ENCODE measurements at regions of chr14 and their contacts with region 1.

Region 1: DNA sequence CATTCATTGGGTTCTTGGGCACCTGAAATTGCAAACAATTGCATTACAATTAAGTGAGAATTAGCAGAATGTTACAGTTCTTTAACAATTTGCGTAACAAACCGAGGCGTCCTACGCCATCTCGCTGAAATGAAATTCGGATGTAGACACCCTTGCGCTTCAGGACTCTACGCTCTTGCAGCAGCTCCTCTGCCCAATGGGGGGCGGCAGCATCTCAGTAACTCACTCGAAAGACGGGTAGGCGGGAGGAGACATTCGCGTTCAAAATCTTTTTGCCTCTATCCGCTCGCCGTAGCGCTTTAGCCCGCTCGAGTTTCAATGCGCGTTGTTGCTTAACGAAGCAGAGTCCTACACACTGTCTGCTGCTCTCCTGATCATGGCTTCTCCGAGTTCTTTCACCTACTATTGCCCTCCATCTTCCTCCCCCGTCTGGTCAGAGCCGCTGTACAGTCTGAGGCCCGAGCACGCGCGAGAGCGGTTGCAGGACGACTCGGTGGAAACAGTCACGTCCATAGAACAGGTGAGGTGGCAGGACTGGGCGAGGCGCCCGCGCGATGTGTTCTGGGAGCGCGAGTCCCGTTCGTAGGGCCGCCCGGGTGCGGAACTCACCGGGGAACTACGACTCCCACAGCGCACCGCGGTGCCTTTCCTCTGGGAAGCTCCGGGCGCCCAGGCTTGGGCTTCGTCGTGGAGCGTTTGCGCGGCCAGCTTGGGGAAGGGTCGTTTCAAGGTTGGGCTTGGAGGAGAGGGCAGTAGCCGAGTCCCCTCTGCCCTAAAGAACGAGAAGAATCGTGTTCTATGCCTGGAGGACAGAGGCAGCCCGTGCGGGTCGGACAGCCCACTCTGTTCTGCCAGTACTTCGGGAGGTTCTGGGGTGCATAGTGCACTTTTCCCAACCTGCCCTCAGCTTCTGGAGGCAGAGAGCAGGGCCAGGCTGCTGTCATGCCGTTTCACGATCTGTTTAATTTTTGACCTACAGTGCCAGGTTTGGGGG is at the start of gene FNTB:
- DNase-seq: peak; percentile 95 to 96
- H3K4me3 ChIP-seq: peak within 1 kb of the TSS; percentile 80
- H3K4me3 Mint-ChIP-seq: peak within 1 kb of the TSS; percentile 98
- H3K27ac Mint-ChIP-seq: peak within 1 kb of the TSS; percentile 99
- H3K4me1 ChIP-seq: no peaks in the 10 kb centered on the region
- H3K4me1 Mint-ChIP-seq: peaks cover 20% of the 10 kb centered on the region
- H3K27me3 ChIP-seq: no peaks in the 10 kb centered on the region
- H3K27me3 Mint-ChIP-seq: no peaks in the 10 kb centered on the region
- CTCF ChIP-seq: peak; percentile 69 to 88
- total RNA-seq, gene FNTB: 20.6 and 21.2 TPM in 2 replicates

Region 2: DNA sequence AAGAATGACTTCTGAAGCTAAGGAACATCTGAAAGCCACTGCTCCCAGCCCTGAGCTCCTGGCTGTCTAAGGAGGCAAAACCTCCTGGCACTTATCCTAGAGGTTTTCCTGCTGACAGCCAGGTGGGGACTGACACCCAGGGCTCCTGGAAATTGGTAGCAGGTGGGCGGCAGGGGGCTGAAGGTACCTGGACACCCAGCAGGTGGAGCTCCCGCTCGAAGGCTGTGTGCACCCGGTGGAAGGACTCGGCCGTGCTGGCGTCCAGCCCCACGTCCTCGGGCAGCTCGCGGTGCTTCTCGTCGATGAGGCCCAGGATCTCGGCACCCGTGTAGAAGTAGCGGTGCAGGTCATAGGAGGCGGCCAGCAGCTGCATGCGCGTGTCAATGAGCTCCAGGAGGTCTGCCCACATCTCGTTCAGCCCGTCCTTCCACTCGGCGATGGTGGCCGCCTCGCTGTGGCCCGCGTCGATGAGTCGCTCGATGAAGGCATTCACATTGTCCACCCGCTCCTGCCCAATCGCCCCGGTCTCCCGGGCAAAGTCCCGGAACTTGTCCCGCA is 214.4 kb before region 1 on chr14:
- CTCF ChIA-PET with region 1: no interaction called
- POLR2A ChIA-PET with region 1: no interaction called
- intact Hi-C with region 1: no loop called
- DNase-seq: no peak
- H3K4me3 ChIP-seq: no peak overlapping the region
- H3K4me3 Mint-ChIP-seq: no peak overlapping the region
- H3K27ac Mint-ChIP-seq: no peak overlapping the region
- H3K4me1 ChIP-seq: no peaks in the 10 kb centered on the region
- H3K4me1 Mint-ChIP-seq: peaks cover 2% of the 10 kb centered on the region
- H3K27me3 ChIP-seq: no peaks in the 10 kb centered on the region
- H3K27me3 Mint-ChIP-seq: no peaks in the 10 kb centered on the region
- CTCF ChIP-seq: peak in 1 of 2 experiments; percentile 19

Region 3: GRCh38 chr14:64914237-64914971 is 72.5 kb before region 1 on chr14 and contains the start of gene CHURC1:
- CTCF ChIA-PET with region 1: interaction called, 6 read pairs
- POLR2A ChIA-PET with region 1: interaction called, 6 read pairs
- intact Hi-C with region 1: loop called (anchors 2 kb)
- DNase-seq: peak; percentile 98 to 99
- H3K4me3 ChIP-seq: peak within 1 kb of the TSS; percentile 98
- H3K4me3 Mint-ChIP-seq: peak within 1 kb of the TSS; percentile 81
- H3K27ac Mint-ChIP-seq: peak within 1 kb of the TSS; percentile 91
- H3K4me1 ChIP-seq: peaks cover 7% of the 10 kb centered on the region
- H3K4me1 Mint-ChIP-seq: peaks cover 11% of the 10 kb centered on the region
- H3K27me3 ChIP-seq: no peaks in the 10 kb centered on the region
- H3K27me3 Mint-ChIP-seq: no peaks in the 10 kb centered on the region
- CTCF ChIP-seq: no peak
- total RNA-seq, gene CHURC1: 51.3 and 52.6 TPM in 2 replicates

Region 4: GRCh38 chr14:64937821-64938193 is 49.1 kb before region 1 on chr14:
- CTCF ChIA-PET with region 1: interaction called, 3 read pairs
- POLR2A ChIA-PET with region 1: interaction called, 3 read pairs
- intact Hi-C with region 1: loop called (anchors 1 kb)
- DNase-seq: no peak
- H3K4me3 ChIP-seq: no peak overlapping the region
- H3K4me3 Mint-ChIP-seq: no peak overlapping the region
- H3K27ac Mint-ChIP-seq: peak overlapping the region; percentile 59
- H3K4me1 ChIP-seq: peaks cover 64% of the 10 kb centered on the region
- H3K4me1 Mint-ChIP-seq: peaks cover 56% of the 10 kb centered on the region
- H3K27me3 ChIP-seq: no peaks in the 10 kb centered on the region
- H3K27me3 Mint-ChIP-seq: no peaks in the 10 kb centered on the region
- CTCF ChIP-seq: no peak

Region 5: DNA sequence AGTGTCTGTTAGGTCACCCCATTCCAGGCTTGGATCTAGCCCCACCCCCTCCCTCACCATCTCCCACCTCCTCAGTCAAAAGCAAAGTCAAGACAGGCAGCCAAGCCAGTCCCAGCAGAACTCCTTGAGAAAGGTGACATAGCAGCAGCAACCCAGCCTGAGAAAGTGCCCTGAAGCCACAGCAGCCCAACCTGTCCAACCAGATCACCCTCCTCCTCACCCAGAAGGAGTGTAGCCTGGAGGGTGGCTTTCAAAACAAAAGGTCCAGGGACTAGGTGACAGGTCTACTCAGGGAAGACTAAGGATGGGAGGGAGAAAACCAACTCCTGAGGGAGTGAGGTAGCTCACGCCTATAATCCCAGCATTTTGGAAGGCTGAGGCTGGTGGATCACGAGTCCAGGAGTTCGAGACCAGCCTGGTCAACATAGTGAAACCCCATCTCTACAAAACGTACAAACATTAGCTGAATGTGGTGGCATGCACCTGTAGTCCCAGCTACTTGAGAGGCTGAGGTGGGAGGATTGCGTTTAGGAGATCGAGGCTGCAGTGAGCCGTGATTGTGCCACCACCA is 19.8 kb before region 1 on chr14:
- CTCF ChIA-PET with region 1: no interaction called
- POLR2A ChIA-PET with region 1: no interaction called
- intact Hi-C with region 1: loop called (anchors 2 kb)
- DNase-seq: peak; percentile 80 to 83
- H3K4me3 ChIP-seq: no peak overlapping the region
- H3K4me3 Mint-ChIP-seq: peak overlapping the region; percentile 15
- H3K27ac Mint-ChIP-seq: peak overlapping the region; percentile 48
- H3K4me1 ChIP-seq: peaks cover 23% of the 10 kb centered on the region
- H3K4me1 Mint-ChIP-seq: peaks cover 18% of the 10 kb centered on the region
- H3K27me3 ChIP-seq: no peaks in the 10 kb centered on the region
- H3K27me3 Mint-ChIP-seq: no peaks in the 10 kb centered on the region
- CTCF ChIP-seq: no peak

Region 6: DNA sequence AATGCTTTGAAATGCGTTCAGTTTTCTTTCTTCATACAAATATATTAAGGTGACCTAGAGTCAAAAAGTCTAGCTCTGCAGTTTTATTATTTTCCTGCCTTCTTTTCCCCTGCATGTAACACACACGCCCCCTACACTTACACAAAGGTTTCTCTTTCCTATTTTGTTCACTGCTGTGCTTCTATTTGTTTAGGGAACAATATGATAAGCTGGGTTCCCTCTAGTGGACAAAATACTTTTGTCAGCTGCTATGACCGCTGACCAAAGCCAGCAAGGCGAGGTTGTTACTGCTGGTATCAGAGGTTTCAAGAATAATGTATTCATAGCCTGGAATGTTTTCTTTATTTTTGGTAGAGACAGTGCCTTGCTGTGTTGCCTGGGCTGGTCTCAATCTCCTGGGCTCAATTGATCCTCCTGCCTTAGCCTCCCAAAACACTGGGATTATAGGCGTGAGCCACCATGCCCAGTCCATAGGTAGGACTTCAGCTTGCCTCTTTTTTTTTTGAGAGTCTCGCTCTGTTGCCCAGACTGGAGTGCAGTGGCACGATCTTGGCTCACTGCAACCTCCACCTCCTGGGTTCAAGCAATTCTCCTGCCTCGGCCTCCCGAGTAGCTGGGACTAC is 33.2 kb after region 1 on chr14:
- CTCF ChIA-PET with region 1: interaction called, 45 read pairs
- POLR2A ChIA-PET with region 1: interaction called, 3 read pairs
- intact Hi-C with region 1: loop called (anchors 1 kb)
- DNase-seq: peak; percentile 44 to 66
- H3K4me3 ChIP-seq: no peak overlapping the region
- H3K4me3 Mint-ChIP-seq: no peak overlapping the region
- H3K27ac Mint-ChIP-seq: no peak overlapping the region
- H3K4me1 ChIP-seq: no peaks in the 10 kb centered on the region
- H3K4me1 Mint-ChIP-seq: peaks cover 7% of the 10 kb centered on the region
- H3K27me3 ChIP-seq: no peaks in the 10 kb centered on the region
- H3K27me3 Mint-ChIP-seq: no peaks in the 10 kb centered on the region
- CTCF ChIP-seq: peak; percentile 78 to 79

Region 7: DNA sequence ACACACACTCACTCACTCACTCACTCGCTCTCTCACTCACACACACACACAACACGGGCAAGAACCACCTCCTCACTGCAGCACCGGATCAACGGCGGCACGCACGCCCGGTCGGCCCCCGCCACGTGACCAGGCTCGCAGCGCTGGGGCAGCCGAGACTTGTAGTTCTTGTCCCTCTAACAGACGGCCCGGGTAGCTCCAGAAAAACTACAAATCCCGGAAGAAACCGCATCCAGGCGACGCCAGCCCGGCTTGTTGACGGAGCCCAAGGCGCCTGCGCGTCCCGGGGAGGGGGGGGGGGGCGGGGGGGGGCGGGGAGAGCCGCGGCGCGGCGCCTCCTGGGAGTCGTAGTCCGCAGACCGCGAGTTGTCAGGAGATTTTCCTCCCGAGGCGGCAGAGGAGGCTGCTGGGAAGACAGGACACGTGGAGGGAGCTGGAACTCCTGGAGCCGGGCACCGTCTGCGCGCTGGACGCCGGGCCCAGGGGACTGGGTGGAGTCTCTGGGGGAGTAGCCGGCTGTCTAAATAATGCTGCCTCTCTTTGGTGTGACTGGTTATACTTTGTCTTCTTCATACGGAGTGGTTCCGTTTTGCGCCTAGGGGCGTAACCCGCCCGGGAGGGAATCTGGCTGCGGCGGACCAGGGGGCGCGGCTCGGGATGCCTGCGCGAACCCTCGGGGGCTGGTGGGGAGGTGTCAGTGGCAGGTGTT is 115.7 kb after region 1 on chr14 and contains the start of gene MAX:
- CTCF ChIA-PET with region 1: no interaction called
- POLR2A ChIA-PET with region 1: interaction called, 15 read pairs
- intact Hi-C with region 1: loop called (anchors 2 kb)
- DNase-seq: peak; percentile 98 to 99
- H3K4me3 ChIP-seq: peak within 1 kb of the TSS; percentile 79
- H3K4me3 Mint-ChIP-seq: peak within 1 kb of the TSS; percentile 81
- H3K27ac Mint-ChIP-seq: peak within 1 kb of the TSS; percentile 82
- H3K4me1 ChIP-seq: no peaks in the 10 kb centered on the region
- H3K4me1 Mint-ChIP-seq: peaks cover 12% of the 10 kb centered on the region
- H3K27me3 ChIP-seq: no peaks in the 10 kb centered on the region
- H3K27me3 Mint-ChIP-seq: no peaks in the 10 kb centered on the region
- CTCF ChIP-seq: no peak
- total RNA-seq, gene MAX: 53.5 and 53.9 TPM in 2 replicates

Region 8: GRCh38 chr14:65164068-65164824 is 177.4 kb after region 1 on chr14:
- CTCF ChIA-PET with region 1: no interaction called
- POLR2A ChIA-PET with region 1: no interaction called
- intact Hi-C with region 1: loop called (anchors 5 kb)
- DNase-seq: peak in 1 of 2 experiments; percentile 62
- H3K4me3 ChIP-seq: no peak overlapping the region
- H3K4me3 Mint-ChIP-seq: no peak overlapping the region
- H3K27ac Mint-ChIP-seq: peak overlapping the region; percentile 36
- H3K4me1 ChIP-seq: peaks cover 8% of the 10 kb centered on the region
- H3K4me1 Mint-ChIP-seq: peaks cover 6% of the 10 kb centered on the region
- H3K27me3 ChIP-seq: no peaks in the 10 kb centered on the region
- H3K27me3 Mint-ChIP-seq: no peaks in the 10 kb centered on the region
- CTCF ChIP-seq: peak; percentile 68 to 81